Activated T-helper 1 cell treated with anti-CD3 and anti-CD28 coated beads, Interleukin-12 subunit alpha, Interleukin-12 subunit beta, Interleukin-2, Interleukin-4 antibody, amounts not matched to agents 30 ng/mL and 10 ng/mL and 1 ng/mL, durations not matched to agents 14 hours and 24 hours and 36 hours (primary cell): ENCODE measurements at regions of chr15 and their contacts with region 1.

Region 1: GRCh38 chr15:33194704-33195670 is at the start of gene FMN1:
- DNase-seq: peak; percentile 85
- H3K4me3 Mint-ChIP-seq: peak within 1 kb of the TSS; percentile 81
- H3K27ac Mint-ChIP-seq: peak within 1 kb of the TSS; percentile 38
- H3K4me1 Mint-ChIP-seq: peaks cover 19% of the 10 kb centered on the region
- H3K27me3 Mint-ChIP-seq: peaks cover 36% of the 10 kb centered on the region
- total RNA-seq, gene FMN1: 0.03 TPM in 1 of 2 replicates, not detected in the other

Region 2: GRCh38 chr15:34049112-34049511 is 854.1 kb after region 1 on chr15:
- intact Hi-C with region 1: loop called (anchors 10 kb)
- DNase-seq: no peak
- H3K4me3 Mint-ChIP-seq: no peak overlapping the region
- H3K27ac Mint-ChIP-seq: no peak overlapping the region
- H3K4me1 Mint-ChIP-seq: peaks cover under 1% of the 10 kb centered on the region
- H3K27me3 Mint-ChIP-seq: peaks cover 5% of the 10 kb centered on the region